ENCODE measurements at regions of chr4 and their contacts with region 1.

Region 1: DNA sequence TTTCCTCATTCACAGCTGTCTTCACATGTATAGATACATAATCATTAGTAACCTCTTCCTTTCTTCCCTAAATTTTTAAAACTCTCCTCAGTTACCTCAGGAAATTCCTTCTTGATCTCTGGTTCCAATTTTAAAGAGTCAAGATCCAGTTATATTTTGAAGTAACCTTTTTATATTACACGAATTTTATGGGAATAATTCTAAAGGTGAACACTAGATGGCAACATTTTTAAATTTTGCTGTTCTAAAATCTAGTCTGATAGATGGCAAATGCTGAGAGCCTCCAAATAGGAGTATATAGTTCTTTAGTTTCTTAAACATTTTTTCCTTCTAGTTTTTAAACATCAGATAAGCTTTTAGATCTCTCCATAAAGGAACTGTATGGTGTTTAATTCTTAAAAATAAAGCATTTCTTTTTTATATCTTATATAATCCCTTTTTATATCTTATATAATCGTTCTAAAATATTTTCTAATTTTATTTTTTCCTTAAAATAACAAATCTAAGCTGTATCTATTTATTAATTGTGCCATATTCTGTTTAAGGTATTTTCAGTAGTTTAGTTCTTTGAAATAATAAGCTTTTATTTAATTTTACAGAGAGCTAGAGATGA is 37.9 kb upstream of the PAPSS1 start:
- DNase-seq: no peak
- ATAC-seq: no peak

Region 2: DNA sequence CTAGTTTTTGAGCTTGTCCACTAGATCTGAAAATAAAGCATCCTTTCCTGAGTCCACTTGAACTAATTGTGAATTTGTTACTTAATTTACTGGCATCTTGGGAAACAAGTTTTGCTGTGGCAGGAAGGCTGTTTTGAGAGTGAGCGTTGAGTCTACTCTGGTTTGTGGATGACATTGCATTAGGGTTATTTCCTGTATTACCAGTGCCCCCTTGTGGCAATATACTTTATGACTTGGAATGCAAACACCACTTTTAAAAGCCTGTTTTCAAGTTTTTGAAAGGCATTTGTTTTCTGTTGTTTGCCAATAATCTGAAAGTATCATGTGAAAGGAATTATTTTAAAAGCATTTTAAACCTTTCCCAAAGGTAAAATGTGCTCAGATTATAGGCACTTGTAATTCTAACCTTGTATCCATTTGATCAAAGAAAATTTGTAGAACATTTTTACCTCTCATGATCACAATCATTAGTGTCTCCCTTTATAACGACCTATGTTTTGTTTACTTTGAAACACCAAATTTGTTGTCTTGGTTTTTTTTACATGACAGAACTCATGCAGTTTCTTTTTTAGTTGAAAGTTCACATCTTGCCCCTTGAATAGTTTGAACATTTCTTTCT is 155.4 kb after region 1 on chr4:
- intact Hi-C with region 1: loop called (anchors 5 kb)
- DNase-seq: no peak
- ATAC-seq: peak; percentile 88

Measured in sciatic nerve (tissue), 2 donors.